ENCODE measurements at regions of chr19 and their contacts with region 1.

Region 1: GRCh38 chr19:7535035-7535992 is at the start of gene PNPLA6:
- DNase-seq: peak; percentile 85 to 95 (median 91)
- ATAC-seq: peak; percentile 91
- H3K4me3 ChIP-seq: peak within 1 kb of the TSS; percentile 99
- H3K4me3 Mint-ChIP-seq: peak within 1 kb of the TSS; percentile 93 to 97 (median 94)
- H3K27ac ChIP-seq: peak within 1 kb of the TSS; percentile 81
- H3K27ac Mint-ChIP-seq: peak within 1 kb of the TSS; percentile 81 to 96 (median 92)
- H3K4me1 ChIP-seq: peaks cover 10 to 17% of the 10 kb centered on the region in 2 donors
- H3K4me1 Mint-ChIP-seq: peaks cover 6 to 26% (median 22%) of the 10 kb centered on the region in 7 donors
- H3K27me3 ChIP-seq: no peaks in the 10 kb centered on the region
- H3K27me3 Mint-ChIP-seq: no peaks in the 10 kb centered on the region
- total RNA-seq, gene PNPLA6: 82.0 to 157 (median 133) TPM

Region 2: DNA sequence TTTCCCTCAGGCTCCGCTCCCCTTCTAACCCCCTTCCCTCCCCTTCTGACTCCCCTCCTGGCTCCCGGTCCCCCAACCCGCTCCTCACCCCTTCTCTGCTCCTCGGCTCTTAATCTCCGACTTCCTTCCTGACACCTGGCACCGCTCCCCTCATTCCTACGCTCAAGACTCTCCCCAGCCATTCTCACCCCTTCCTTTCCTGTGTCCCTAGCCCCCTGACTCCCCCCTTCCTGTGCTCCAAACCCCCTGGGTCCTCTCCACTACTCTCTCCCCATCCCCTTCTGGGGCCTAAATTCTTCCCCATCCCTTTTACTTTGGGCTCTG is 1173.3 kb before region 1 on chr19:
- CTCF ChIA-PET with region 1: no interaction called
- POLR2A ChIA-PET with region 1: no interaction called
- intact Hi-C with region 1: loop called in 1 of 2 experiments (anchors 2 kb)
- DNase-seq: no peak
- ATAC-seq: no peak
- H3K4me3 ChIP-seq: peak overlapping the region; percentile 76
- H3K4me3 Mint-ChIP-seq: peak overlapping the region; percentile 83 to 100 (median 97)
- H3K27ac ChIP-seq: peak overlapping the region; percentile 82
- H3K27ac Mint-ChIP-seq: peak overlapping the region; percentile 87 to 98 (median 96)
- H3K4me1 ChIP-seq: peaks cover 10 to 13% of the 10 kb centered on the region in 2 donors
- H3K4me1 Mint-ChIP-seq: peaks cover 10 to 37% (median 22%) of the 10 kb centered on the region in 7 donors
- H3K27me3 ChIP-seq: no peaks in the 10 kb centered on the region
- H3K27me3 Mint-ChIP-seq: no peaks in the 10 kb centered on the region

Region 3: DNA sequence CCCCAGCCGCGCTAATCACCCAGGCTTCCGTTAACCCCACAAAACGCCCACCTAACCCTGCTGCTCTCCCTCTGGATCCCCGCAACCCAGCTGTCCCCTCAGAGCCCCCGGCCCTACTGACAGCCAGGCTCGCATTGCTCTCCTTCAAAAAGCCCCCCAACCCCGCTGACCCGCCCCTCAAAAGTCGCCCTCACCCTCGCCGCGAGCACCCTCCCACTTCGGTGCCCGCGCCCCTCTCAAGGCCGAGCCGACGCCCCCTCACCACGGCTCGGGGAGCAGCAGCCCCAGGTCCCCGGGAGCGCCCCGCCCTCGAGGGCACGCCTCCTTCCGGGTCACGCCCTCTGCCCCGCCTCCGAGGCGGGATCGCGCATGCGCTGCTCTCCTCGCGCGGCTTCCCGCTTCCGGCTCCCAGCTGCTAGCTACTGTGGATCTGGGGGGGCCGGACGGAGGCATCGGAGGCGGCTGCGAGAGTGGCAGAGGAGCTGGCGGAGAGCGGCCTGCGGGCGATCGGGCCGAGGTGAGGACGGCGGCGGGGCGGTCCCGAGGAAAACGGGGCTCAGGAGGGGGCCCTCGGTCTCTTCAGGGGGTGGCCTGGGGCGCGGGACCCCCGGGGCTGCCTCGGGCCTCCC is 140.5 kb before region 1 on chr19:
- CTCF ChIA-PET with region 1: no interaction called
- POLR2A ChIA-PET with region 1: no interaction called
- intact Hi-C with region 1: loop called in 1 of 2 experiments (anchors 2 kb)
- DNase-seq: peak; percentile 85 to 99 (median 91)
- ATAC-seq: peak; percentile 94
- H3K4me3 ChIP-seq: peak overlapping the region; percentile 46
- H3K4me3 Mint-ChIP-seq: peak overlapping the region; percentile 67 to 91 (median 84)
- H3K27ac ChIP-seq: peak overlapping the region; percentile 69
- H3K27ac Mint-ChIP-seq: peak overlapping the region; percentile 50 to 85 (median 80)
- H3K4me1 ChIP-seq: peaks cover 5 to 32% of the 10 kb centered on the region in 2 donors
- H3K4me1 Mint-ChIP-seq: peaks cover 15 to 64% (median 50%) of the 10 kb centered on the region in 7 donors
- H3K27me3 ChIP-seq: no peaks in the 10 kb centered on the region
- H3K27me3 Mint-ChIP-seq: no peaks in the 10 kb centered on the region

Region 4: GRCh38 chr19:7522072-7522922 is 13.0 kb before region 1 on chr19 and contains the start of gene MCOLN1:
- CTCF ChIA-PET with region 1: interaction called, 6 read pairs
- POLR2A ChIA-PET with region 1: interaction called, 78 read pairs
- intact Hi-C with region 1: loop called (anchors 1 kb)
- DNase-seq: peak; percentile 97 to 100 (median 99)
- ATAC-seq: peak; percentile 98
- H3K4me3 ChIP-seq: peak within 1 kb of the TSS; percentile 46
- H3K4me3 Mint-ChIP-seq: peak within 1 kb of the TSS; percentile 80 to 95 (median 88)
- H3K27ac ChIP-seq: peak within 1 kb of the TSS; percentile 30
- H3K27ac Mint-ChIP-seq: peak within 1 kb of the TSS; percentile 10 to 95 (median 90)
- H3K4me1 ChIP-seq: peaks cover 10 to 14% of the 10 kb centered on the region in 2 donors
- H3K4me1 Mint-ChIP-seq: peaks cover 14 to 23% (median 17%) of the 10 kb centered on the region in 7 donors
- H3K27me3 ChIP-seq: no peaks in the 10 kb centered on the region
- H3K27me3 Mint-ChIP-seq: peaks cover 0 to 14% (median 0%) of the 10 kb centered on the region in 5 donors
- total RNA-seq, gene MCOLN1: 13.8 to 49.2 (median 18.1) TPM

Region 5: GRCh38 chr19:7595466-7596133 is 60.3 kb after region 1 on chr19 and contains the start of gene CAMSAP3:
- CTCF ChIA-PET with region 1: no interaction called
- POLR2A ChIA-PET with region 1: no interaction called
- intact Hi-C with region 1: no loop called
- DNase-seq: peak in 7 of 9 donors; percentile 17 to 48 (median 42)
- ATAC-seq: peak; percentile 84
- H3K4me3 ChIP-seq: peak within 1 kb of the TSS; percentile 30
- H3K4me3 Mint-ChIP-seq: peak within 1 kb of the TSS; percentile 39 to 86 (median 69)
- H3K27ac ChIP-seq: no peak within 1 kb of the TSS
- H3K27ac Mint-ChIP-seq: peak within 1 kb of the TSS in 1 of 9 donors; percentile 0
- H3K4me1 ChIP-seq: no peaks in the 10 kb centered on the region
- H3K4me1 Mint-ChIP-seq: peaks cover 0 to 9% (median 4%) of the 10 kb centered on the region in 7 donors
- H3K27me3 ChIP-seq: peaks cover 0 to 5% of the 10 kb centered on the region in 2 donors
- H3K27me3 Mint-ChIP-seq: peaks cover 29 to 59% (median 41%) of the 10 kb centered on the region in 5 donors
- total RNA-seq, gene CAMSAP3: 0.16 to 0.76 (median 0.35) TPM in 4 of 5 experiments, not detected in the other

Region 6: GRCh38 chr19:7829561-7830271 is 294.4 kb after region 1 on chr19 and contains the start of gene EVI5L:
- CTCF ChIA-PET with region 1: no interaction called
- POLR2A ChIA-PET with region 1: no interaction called
- intact Hi-C with region 1: loop called in 1 of 2 experiments (anchors 1 kb)
- DNase-seq: peak; percentile 99 to 100 (median 99)
- ATAC-seq: peak; percentile 88
- H3K4me3 ChIP-seq: peak within 1 kb of the TSS; percentile 47
- H3K4me3 Mint-ChIP-seq: peak within 1 kb of the TSS; percentile 77 to 88 (median 84)
- H3K27ac ChIP-seq: peak within 1 kb of the TSS; percentile 50
- H3K27ac Mint-ChIP-seq: peak within 1 kb of the TSS; percentile 4 to 94 (median 84)
- H3K4me1 ChIP-seq: peaks cover 5 to 9% of the 10 kb centered on the region in 2 donors
- H3K4me1 Mint-ChIP-seq: peaks cover 5 to 25% (median 23%) of the 10 kb centered on the region in 7 donors
- H3K27me3 ChIP-seq: no peaks in the 10 kb centered on the region
- H3K27me3 Mint-ChIP-seq: peaks cover 0 to 11% (median 0%) of the 10 kb centered on the region in 5 donors
- total RNA-seq, gene EVI5L: 7.4 to 12.2 (median 11.4) TPM

Region 7: GRCh38 chr19:8307965-8308866 is 772.9 kb after region 1 on chr19 and contains the start of gene CD320:
- CTCF ChIA-PET with region 1: no interaction called
- POLR2A ChIA-PET with region 1: no interaction called
- intact Hi-C with region 1: loop called in 1 of 2 experiments (anchors 10 kb)
- DNase-seq: peak; percentile 84 to 90 (median 89)
- ATAC-seq: peak; percentile 95
- H3K4me3 ChIP-seq: peak within 1 kb of the TSS; percentile 83
- H3K4me3 Mint-ChIP-seq: peak within 1 kb of the TSS; percentile 90 to 97 (median 92)
- H3K27ac ChIP-seq: peak within 1 kb of the TSS; percentile 89
- H3K27ac Mint-ChIP-seq: peak within 1 kb of the TSS; percentile 79 to 98 (median 94)
- H3K4me1 ChIP-seq: peaks cover 20 to 22% of the 10 kb centered on the region in 2 donors
- H3K4me1 Mint-ChIP-seq: peaks cover 18 to 38% (median 35%) of the 10 kb centered on the region in 7 donors
- H3K27me3 ChIP-seq: no peaks in the 10 kb centered on the region
- H3K27me3 Mint-ChIP-seq: no peaks in the 10 kb centered on the region
- total RNA-seq, gene CD320: 20.5 to 52.0 (median 27.2) TPM

Measured in naive thymus-derived CD4-positive, alpha-beta T cell (primary cell).